ENCODE measurements at regions of chr5 and their contacts with region 1.

Region 1: GRCh38 chr5:107389130-107389774 is 281.5 kb downstream of the EFNA5 start:
- DNase-seq: peak; percentile 31 to 62
- ATAC-seq: peak; percentile 77 to 88 (median 85)
- H3K4me3 ChIP-seq: no peak overlapping the region
- H3K4me3 Mint-ChIP-seq: peak overlapping the region; percentile 85
- H3K27ac ChIP-seq: peak overlapping the region; percentile 59
- H3K27ac Mint-ChIP-seq: peak overlapping the region; percentile 89 to 91
- H3K4me1 ChIP-seq: peaks cover 18% of the 10 kb centered on the region
- H3K4me1 Mint-ChIP-seq: peaks cover 34 to 39% of the 10 kb centered on the region in 2 donors
- H3K27me3 ChIP-seq: no peaks in the 10 kb centered on the region
- H3K27me3 Mint-ChIP-seq: no peaks in the 10 kb centered on the region
- CTCF ChIP-seq: no peak

Region 2: DNA sequence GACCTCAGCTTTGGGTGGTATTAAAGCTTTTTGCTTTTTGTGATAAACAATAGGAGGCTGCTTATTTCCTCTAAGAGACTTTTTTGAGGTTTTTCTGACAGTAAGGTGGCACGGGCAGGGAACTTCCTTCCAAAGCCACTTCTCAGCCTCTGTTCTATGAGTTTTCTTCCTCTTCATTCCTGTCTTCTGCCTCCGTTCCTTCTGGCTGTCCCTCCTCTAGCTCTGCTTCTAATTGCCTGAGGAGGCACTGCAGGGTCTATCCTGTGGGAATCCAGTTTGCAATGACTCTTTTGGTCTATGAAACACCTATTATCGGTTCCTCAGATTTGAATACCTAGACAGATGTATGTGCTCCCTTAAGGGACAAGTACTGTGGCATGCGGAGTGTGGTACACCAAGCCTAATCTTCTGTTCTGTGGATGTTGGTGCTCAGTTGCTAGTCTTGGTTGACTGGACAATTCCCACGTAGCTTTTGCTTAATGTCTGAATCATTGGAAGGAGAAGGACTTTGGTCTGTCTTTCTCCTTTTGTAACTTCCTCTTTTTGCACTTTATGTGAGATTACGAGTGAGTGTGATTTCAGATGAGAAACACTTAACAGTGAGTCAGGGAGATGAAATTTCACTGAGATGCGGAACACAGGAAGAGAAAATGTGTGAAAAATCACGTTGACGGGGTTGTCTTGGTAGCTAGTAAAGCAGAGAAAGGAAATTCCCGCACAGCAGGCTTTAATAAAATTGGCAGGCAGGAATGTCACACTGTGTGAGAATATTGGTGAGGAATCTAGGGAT is 23.7 kb before region 1 on chr5:
- intact Hi-C with region 1: loop called (anchors 1 kb)
- DNase-seq: peak; percentile 21 to 45
- ATAC-seq: peak; percentile 78 to 87 (median 83)
- H3K4me3 ChIP-seq: no peak overlapping the region
- H3K4me3 Mint-ChIP-seq: peak overlapping the region; percentile 72
- H3K27ac ChIP-seq: peak overlapping the region; percentile 74
- H3K27ac Mint-ChIP-seq: peak overlapping the region; percentile 78 to 88
- H3K4me1 ChIP-seq: peaks cover 11% of the 10 kb centered on the region
- H3K4me1 Mint-ChIP-seq: peaks cover 31 to 40% of the 10 kb centered on the region in 2 donors
- H3K27me3 ChIP-seq: no peaks in the 10 kb centered on the region
- H3K27me3 Mint-ChIP-seq: no peaks in the 10 kb centered on the region
- CTCF ChIP-seq: no peak

Region 3: DNA sequence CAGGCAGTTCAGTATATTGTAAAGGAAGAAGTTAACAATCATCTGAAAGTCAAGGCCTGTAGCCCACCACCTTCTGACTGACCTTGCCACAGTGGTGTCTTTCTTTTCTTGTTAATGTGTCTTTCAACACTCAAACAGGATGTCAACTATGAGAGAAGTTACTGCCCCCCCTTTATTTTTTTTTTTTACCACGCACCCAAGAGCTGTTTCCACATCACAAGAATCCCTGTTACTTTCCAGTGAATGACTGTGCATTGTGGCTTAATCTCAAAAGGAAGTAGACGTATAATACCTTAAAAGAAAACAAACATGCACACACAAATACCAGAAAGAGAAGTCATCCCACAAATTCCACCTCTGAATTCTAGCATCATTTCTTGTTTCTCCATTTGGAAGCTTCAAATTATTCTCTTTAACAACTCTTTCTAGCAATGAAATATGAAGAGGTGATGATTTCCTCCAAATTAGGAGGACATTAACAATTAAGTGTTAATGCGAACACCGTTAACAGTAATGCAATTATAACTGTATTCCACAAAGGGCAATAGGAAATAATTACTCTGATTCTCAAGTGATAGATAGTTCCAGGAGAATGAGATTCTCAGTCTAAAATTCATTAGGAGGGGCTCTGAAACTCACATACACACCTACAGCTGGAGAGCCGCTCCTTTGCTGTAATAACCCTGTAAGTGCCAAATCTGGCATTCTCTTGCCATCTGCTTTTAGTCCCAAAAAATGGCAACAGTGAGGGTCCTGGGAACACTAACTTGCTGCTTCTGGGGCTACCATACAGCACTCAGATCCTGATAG is 80.4 kb after region 1 on chr5:
- intact Hi-C with region 1: loop called (anchors 1 kb)
- DNase-seq: peak in 1 of 2 donors; percentile 51
- ATAC-seq: peak; percentile 61 to 81 (median 63)
- H3K4me3 ChIP-seq: no peak overlapping the region
- H3K4me3 Mint-ChIP-seq: peak overlapping the region; percentile 74
- H3K27ac ChIP-seq: peak overlapping the region; percentile 73
- H3K27ac Mint-ChIP-seq: peak overlapping the region; percentile 84 to 97
- H3K4me1 ChIP-seq: peaks cover 54% of the 10 kb centered on the region
- H3K4me1 Mint-ChIP-seq: peaks cover 73 to 80% of the 10 kb centered on the region in 2 donors
- H3K27me3 ChIP-seq: no peaks in the 10 kb centered on the region
- H3K27me3 Mint-ChIP-seq: no peaks in the 10 kb centered on the region
- CTCF ChIP-seq: no peak

Region 4: DNA sequence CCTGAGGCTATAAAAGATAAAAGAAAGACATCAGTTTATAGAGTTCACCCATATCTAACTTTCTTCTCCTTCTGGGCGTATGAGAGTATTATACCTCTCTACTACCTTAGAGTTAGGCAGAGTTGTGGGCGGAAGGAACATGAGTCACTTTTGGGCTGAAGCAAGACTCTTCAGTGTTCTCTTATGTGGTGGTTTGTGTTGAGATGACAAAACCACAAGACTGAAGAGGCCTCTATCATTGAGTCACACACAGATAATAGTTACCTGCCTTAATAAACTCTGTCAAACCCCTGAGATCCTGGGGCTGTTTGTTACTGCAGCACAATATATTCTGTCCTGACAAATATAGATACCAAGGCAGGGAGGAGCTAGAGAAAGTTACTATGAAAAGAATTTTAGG is 97.2 kb after region 1 on chr5:
- intact Hi-C with region 1: loop called (anchors 1 kb)
- DNase-seq: peak; percentile 47 to 72
- ATAC-seq: peak; percentile 92 to 99 (median 95)
- H3K4me3 ChIP-seq: no peak overlapping the region
- H3K4me3 Mint-ChIP-seq: peak overlapping the region; percentile 45
- H3K27ac ChIP-seq: peak overlapping the region; percentile 95
- H3K27ac Mint-ChIP-seq: peak overlapping the region; percentile 88 to 98
- H3K4me1 ChIP-seq: peaks cover 19% of the 10 kb centered on the region
- H3K4me1 Mint-ChIP-seq: peaks cover 43 to 55% of the 10 kb centered on the region in 2 donors
- H3K27me3 ChIP-seq: no peaks in the 10 kb centered on the region
- H3K27me3 Mint-ChIP-seq: no peaks in the 10 kb centered on the region
- CTCF ChIP-seq: no peak

Region 5: GRCh38 chr5:107571621-107572536 is 182.6 kb after region 1 on chr5:
- intact Hi-C with region 1: loop called (anchors 1 kb)
- DNase-seq: peak; percentile 90
- ATAC-seq: peak; percentile 88 to 94 (median 93)
- H3K4me3 ChIP-seq: peak overlapping the region; percentile 40
- H3K4me3 Mint-ChIP-seq: peak overlapping the region; percentile 80
- H3K27ac ChIP-seq: peak overlapping the region; percentile 72
- H3K27ac Mint-ChIP-seq: peak overlapping the region; percentile 88 to 90
- H3K4me1 ChIP-seq: peaks cover 20% of the 10 kb centered on the region
- H3K4me1 Mint-ChIP-seq: peaks cover 17 to 25% of the 10 kb centered on the region in 2 donors
- H3K27me3 ChIP-seq: no peaks in the 10 kb centered on the region
- H3K27me3 Mint-ChIP-seq: peaks cover 0 to 2% of the 10 kb centered on the region in 2 donors
- CTCF ChIP-seq: peak; percentile 95

Region 6: DNA sequence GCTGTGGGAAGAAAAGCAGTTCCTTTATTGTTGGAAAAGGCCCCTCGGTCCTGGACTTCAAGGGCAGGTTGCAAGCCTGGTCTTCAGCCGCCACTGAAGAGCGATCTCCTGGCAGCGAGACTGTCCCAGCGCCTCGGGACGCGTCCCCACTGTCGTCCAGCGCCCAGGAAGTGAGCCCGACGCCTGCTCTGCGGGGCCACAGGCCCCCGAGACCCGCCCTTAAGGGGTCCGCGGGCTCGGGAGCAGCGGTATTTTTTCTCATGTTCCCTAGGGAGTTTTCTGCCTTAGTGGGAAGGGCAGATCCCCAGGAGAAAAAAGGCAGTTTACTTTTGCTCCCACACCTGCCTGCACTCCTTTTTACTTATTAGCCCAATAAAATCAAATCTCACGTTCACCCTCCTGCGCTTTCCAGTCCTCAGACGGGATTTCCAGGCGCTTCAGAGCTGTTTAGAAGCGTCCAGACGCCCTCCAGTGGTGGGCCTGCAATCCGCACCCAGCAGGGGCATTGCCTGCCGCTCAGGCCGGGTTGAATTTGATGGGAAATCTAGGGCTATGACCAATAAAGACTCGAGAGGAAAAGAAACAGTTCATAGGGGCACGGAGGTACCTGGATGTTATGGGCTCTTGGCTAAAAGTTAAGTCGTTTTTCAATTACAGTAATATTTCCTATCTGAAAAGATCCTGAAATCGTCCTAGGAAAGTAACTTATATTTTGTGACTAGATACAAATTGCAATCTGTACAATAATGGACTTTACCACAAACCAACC is 284.3 kb after region 1 on chr5:
- intact Hi-C with region 1: loop called (anchors 5 kb)
- DNase-seq: peak; percentile 73 to 79
- ATAC-seq: peak; percentile 76 to 85 (median 77)
- H3K4me3 ChIP-seq: peak overlapping the region; percentile 41
- H3K4me3 Mint-ChIP-seq: peak overlapping the region; percentile 89
- H3K27ac ChIP-seq: no peak overlapping the region
- H3K27ac Mint-ChIP-seq: peak overlapping the region; percentile 5 to 11
- H3K4me1 ChIP-seq: peaks cover 46% of the 10 kb centered on the region
- H3K4me1 Mint-ChIP-seq: peaks cover 25 to 39% of the 10 kb centered on the region in 2 donors
- H3K27me3 ChIP-seq: peaks cover 66% of the 10 kb centered on the region
- H3K27me3 Mint-ChIP-seq: peaks cover 46 to 58% of the 10 kb centered on the region in 2 donors
- CTCF ChIP-seq: peak; percentile 99